Activated CD4-positive, alpha-beta T cell treated with anti-CD3 and anti-CD28 coated beads, Interleukin-2, amount 10 ng/mL, durations not matched to agents 7 days and 5 days (primary cell): ENCODE measurements at regions of chr20 and their contacts with region 1.

Region 1: DNA sequence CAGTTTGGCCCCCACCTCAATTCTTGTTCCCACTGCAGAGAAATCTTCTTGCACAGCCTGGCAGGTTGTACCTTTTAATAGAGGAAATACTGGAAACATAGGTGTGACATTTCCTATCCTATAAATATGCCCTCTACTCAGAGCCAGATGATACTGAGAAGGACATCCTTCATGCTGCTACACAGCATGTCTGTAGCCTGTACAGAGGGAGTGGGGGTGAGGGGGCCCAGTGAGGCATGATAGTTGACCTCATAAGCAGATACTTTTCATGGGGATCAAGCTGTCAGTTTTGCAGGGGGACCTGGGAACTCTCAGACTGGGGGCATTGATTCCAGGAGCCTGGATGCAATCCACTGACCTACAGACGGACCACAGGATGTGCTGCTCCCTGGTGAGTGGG is 96.2 kb upstream of the TOP1 start:
- DNase-seq: no peak
- H3K4me3 Mint-ChIP-seq: no peak overlapping the region
- H3K27ac Mint-ChIP-seq: no peak overlapping the region
- H3K4me1 Mint-ChIP-seq: peaks cover 5% of the 10 kb centered on the region
- H3K27me3 Mint-ChIP-seq: peaks cover 3% of the 10 kb centered on the region

Region 2: GRCh38 chr20:41570557-41570956 is 638.1 kb after region 1 on chr20:
- CTCF ChIA-PET with region 1: no interaction called
- POLR2A ChIA-PET with region 1: interaction called, 12 read pairs
- DNase-seq: no peak
- H3K4me3 Mint-ChIP-seq: no peak overlapping the region
- H3K27ac Mint-ChIP-seq: no peak overlapping the region
- H3K4me1 Mint-ChIP-seq: peaks cover 14% of the 10 kb centered on the region
- H3K27me3 Mint-ChIP-seq: no peaks in the 10 kb centered on the region